K562 (cell line): ENCODE measurements at regions of chr4 and their contacts with region 1.

Region 1: GRCh38 chr4:75724066-75724866 is at the start of gene USO1:
- DNase-seq: peak; percentile 95 to 99 (median 96)
- ATAC-seq: peak; percentile 92
- H3K4me3 ChIP-seq: peak within 1 kb of the TSS; percentile 77
- H3K27ac ChIP-seq: peak within 1 kb of the TSS; percentile 95
- H3K4me1 ChIP-seq: peaks cover 11 to 27% of the 10 kb centered on the region in 2 experiments; a peak in 3 of 5 replicates
- H3K27me3 ChIP-seq: no peaks in the 10 kb centered on the region
- CTCF ChIP-seq: peak; percentile 65 to 92 (median 84); a peak in 5 of 6 replicates
- EP300 ChIP-seq: peak; percentile 18; the same call in 1 of the 2 replicates
- POLR2A ChIP-seq: peak; percentile 97
- RAD21 ChIP-seq: peak; percentile 55 to 60
- polyA plus RNA-seq, gene USO1: 19.3 to 22.1 TPM

Region 2: DNA sequence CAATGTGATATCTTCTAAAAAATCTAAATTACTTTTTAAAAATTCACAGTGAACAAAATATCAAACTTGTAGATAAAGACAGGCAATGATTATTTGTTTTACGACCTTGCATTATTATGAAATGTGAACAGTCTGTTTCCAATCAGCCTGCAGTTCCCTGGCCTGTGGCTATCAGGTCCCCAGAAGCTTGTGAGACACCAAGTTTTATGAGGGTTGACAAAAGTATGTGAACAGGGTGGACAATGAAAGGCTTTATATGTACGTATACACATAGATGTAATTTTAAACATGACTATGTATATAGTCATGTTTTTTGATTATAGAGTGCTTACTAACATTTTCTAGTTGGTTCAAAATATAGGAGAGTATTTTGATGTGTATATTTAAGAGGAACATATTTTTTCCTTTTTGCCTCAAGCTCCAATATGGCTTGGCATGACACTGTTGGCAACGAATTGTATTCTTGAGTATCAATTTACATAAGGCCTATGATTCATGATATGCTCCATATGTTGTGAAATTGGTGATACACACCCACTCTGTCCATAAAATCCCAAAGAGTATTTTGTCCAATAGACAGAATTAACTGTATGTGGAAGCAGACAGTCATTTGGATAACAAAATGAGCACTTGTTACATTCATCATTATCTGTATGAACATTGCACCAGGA is 985.7 kb before region 1 on chr4:
- CTCF ChIA-PET with region 1: no interaction called
- POLR2A ChIA-PET with region 1: no interaction called
- in situ Hi-C with region 1: no loop called
- intact Hi-C with region 1: no loop called
- DNase-seq: no peak
- ATAC-seq: no peak
- H3K4me3 ChIP-seq: no peak overlapping the region
- H3K27ac ChIP-seq: no peak overlapping the region
- H3K4me1 ChIP-seq: no peaks in the 10 kb centered on the region
- H3K27me3 ChIP-seq: peaks cover 0 to 5% of the 10 kb centered on the region in 2 experiments; a peak in 2 of 5 replicates
- CTCF ChIP-seq: no peak
- EP300 ChIP-seq: no peak
- POLR2A ChIP-seq: no peak
- RAD21 ChIP-seq: no peak

Region 3: DNA sequence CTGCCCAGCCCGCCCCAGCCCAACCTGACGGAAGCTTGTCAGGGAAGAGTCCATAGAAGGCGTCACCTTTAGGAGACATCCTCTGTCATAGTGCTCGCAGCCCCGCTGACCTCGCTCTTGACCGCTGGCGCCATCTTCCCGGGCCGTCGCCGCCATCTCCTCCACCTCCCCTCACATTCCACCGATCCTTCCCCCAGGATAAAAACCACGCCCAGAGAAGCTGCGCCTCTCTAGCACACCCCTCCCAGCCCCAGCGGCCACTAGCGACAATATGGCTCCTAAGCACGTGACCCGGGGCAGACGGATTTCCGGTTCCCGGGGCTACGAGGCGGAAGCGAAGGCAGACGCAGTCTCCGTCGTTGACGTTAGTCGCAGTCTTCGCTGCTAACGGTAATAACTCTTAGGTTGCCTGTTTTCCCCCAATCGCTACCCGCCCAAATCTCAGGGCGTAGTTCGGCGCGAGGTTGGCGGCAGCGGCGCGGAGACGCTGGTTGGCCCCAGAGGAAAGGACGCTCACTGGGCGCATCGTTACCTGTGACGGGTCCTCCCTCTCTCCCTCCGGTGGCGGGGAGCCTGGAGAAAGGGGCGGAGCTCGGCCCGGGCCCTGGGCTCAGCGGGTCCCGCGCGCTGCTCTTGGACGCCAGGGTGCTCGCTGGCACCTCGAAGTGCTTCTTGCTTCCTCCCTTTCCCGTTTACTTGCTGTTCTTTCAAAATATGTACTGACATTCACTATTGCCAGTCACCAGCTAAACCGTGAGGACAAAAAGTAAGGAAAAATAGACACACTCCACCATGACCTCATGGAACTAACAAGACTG is 209.9 kb before region 1 on chr4 and contains the starts of genes RCHY1 and THAP6:
- CTCF ChIA-PET with region 1: no interaction called
- POLR2A ChIA-PET with region 1: no interaction called
- in situ Hi-C with region 1: no loop called
- intact Hi-C with region 1: loop called (anchors 5 kb)
- DNase-seq: peak; percentile 84 to 98 (median 88)
- ATAC-seq: peak; percentile 93
- H3K4me3 ChIP-seq: peak within 1 kb of the TSS; percentile 56
- H3K27ac ChIP-seq: peak within 1 kb of the TSS; percentile 95
- H3K4me1 ChIP-seq: peaks cover 0 to 16% of the 10 kb centered on the region in 2 experiments; a peak in 4 of 5 replicates
- H3K27me3 ChIP-seq: no peaks in the 10 kb centered on the region
- CTCF ChIP-seq: 0 out of 6 replicates have a peak, but pooled peaks of 1 of the 3 experiments have one; percentile 9
- EP300 ChIP-seq: no peak
- POLR2A ChIP-seq: peak; percentile 97
- RAD21 ChIP-seq: no peak
- polyA plus RNA-seq, gene RCHY1: 71.2 to 85.1 TPM
- polyA plus RNA-seq, gene THAP6: 16.3 to 20.1 TPM

Region 4: DNA sequence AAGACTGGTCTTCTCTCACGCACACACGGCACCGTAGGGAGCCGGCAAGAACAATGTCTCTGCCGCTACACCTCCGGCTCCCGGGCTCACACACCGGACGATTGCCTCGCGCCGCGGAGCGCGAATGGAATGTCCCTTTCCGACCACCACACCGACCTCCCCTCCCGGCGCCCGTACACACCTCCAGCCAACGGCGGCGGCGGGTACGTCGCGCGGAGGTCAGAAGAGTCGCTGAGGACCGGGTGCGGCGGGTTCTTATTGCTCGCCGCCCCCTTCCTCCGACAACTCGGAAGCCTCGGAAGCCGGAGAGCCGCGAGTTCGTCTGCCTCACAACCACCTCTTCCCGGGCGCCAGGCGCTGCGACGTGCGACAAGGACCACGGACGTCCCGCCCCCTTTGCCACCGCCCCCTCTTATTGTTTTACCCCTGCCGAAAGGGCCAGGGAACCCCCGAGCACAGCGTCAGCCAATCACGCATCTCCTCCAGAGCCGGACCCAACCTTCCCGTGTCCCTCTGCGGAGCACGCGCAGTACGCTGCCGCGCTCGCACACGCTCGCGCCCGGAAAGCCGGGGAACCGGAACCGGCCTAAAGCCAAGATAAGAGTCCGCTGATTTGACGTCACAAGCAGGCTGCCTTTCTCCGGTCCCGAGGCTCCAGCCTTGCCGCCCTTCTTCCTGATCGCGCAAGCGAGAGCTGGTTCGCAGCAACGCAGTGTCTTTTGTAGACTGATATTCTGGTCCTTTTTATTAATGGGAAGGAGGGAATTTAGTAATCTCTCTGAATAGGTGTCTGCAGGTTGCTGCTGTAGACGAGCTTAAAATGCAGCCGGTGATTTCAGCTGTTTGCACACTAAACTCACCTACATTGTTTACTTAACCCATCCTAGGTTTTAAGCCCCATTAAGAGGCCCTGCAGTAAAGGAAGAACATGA is 51.0 kb before region 1 on chr4 and contains the start of gene G3BP2:
- CTCF ChIA-PET with region 1: no interaction called
- POLR2A ChIA-PET with region 1: interaction called, 13 read pairs
- in situ Hi-C with region 1: no loop called
- intact Hi-C with region 1: loop called (anchors 1 kb)
- DNase-seq: peak; percentile 98 to 99 (median 98)
- ATAC-seq: peak; percentile 94
- H3K4me3 ChIP-seq: peak within 1 kb of the TSS; percentile 94
- H3K27ac ChIP-seq: peak within 1 kb of the TSS; percentile 99
- H3K4me1 ChIP-seq: peaks cover 0 to 30% of the 10 kb centered on the region in 2 experiments; a peak in 3 of 5 replicates
- H3K27me3 ChIP-seq: no peaks in the 10 kb centered on the region
- CTCF ChIP-seq: 0 out of 6 replicates have a peak, but pooled peaks of 2 of the 3 experiments have one; percentile 1
- EP300 ChIP-seq: peak; percentile 56
- POLR2A ChIP-seq: peak; percentile 94
- RAD21 ChIP-seq: no peak
- polyA plus RNA-seq, gene G3BP2: 25.2 to 36.2 TPM

Region 5: GRCh38 chr4:75745161-75745560 is 20.9 kb after region 1 on chr4:
- CTCF ChIA-PET with region 1: no interaction called
- POLR2A ChIA-PET with region 1: interaction called, 30 read pairs
- in situ Hi-C with region 1: no loop called
- intact Hi-C with region 1: no loop called
- DNase-seq: peak in 2 of 4 experiments; percentile 15 to 34
- ATAC-seq: peak; percentile 78
- H3K4me3 ChIP-seq: no peak overlapping the region
- H3K27ac ChIP-seq: peak overlapping the region; percentile 66; the same call in 1 of the 3 replicates
- H3K4me1 ChIP-seq: peaks cover 4 to 15% of the 10 kb centered on the region in 2 experiments; a peak in 3 of 5 replicates
- H3K27me3 ChIP-seq: no peaks in the 10 kb centered on the region
- CTCF ChIP-seq: no peak
- EP300 ChIP-seq: no peak
- POLR2A ChIP-seq: no peak
- RAD21 ChIP-seq: no peak

Region 6: GRCh38 chr4:75849461-75849860 is 125.2 kb after region 1 on chr4:
- CTCF ChIA-PET with region 1: no interaction called
- POLR2A ChIA-PET with region 1: no interaction called
- in situ Hi-C with region 1: no loop called
- intact Hi-C with region 1: loop called (anchors 5 kb)
- DNase-seq: peak in 1 of 4 experiments; percentile 7
- ATAC-seq: 0 out of 3 replicates have a peak, but pooled peaks have one; percentile 15
- H3K4me3 ChIP-seq: no peak overlapping the region
- H3K27ac ChIP-seq: no peak overlapping the region
- H3K4me1 ChIP-seq: peaks cover 0 to 5% of the 10 kb centered on the region in 2 experiments; a peak in 3 of 5 replicates
- H3K27me3 ChIP-seq: peaks cover 0 to 21% of the 10 kb centered on the region in 2 experiments; a peak in 4 of 5 replicates
- CTCF ChIP-seq: no peak
- EP300 ChIP-seq: no peak
- POLR2A ChIP-seq: no peak
- RAD21 ChIP-seq: no peak